CD8-positive, alpha-beta T cell (primary cell): ENCODE measurements at regions of chr9 and their contacts with region 1.

Region 1: DNA sequence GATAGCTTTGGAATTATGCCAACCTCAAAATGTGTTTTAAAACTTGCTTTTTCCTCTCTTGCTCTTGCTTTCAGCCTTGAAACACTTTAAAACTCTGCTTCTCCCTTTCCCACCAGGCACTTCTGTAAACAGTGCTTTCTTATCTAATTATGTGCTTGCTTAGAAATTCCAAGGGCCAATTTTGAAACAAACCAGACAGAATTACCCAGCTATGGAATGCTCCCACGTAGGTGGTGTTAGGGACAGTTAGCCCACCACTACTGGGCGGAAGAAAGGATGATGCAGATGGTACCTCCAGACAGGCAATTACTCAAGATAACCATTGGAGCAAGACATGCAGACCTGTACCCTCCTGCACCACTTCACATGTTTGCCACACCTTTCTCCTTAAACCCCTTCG is 523.0 kb upstream of the PTPRD start:
- DNase-seq: no peak
- ATAC-seq: no peak
- H3K4me3 ChIP-seq: no peak overlapping the region
- H3K4me3 Mint-ChIP-seq: no peak overlapping the region
- H3K27ac ChIP-seq: no peak overlapping the region
- H3K27ac Mint-ChIP-seq: no peak overlapping the region
- H3K4me1 ChIP-seq: no peaks in the 10 kb centered on the region
- H3K4me1 Mint-ChIP-seq: no peaks in the 10 kb centered on the region
- H3K27me3 ChIP-seq: no peaks in the 10 kb centered on the region
- H3K27me3 Mint-ChIP-seq: no peaks in the 10 kb centered on the region
- CTCF ChIP-seq: no peak

Region 2: GRCh38 chr9:11194246-11194645 is 58.4 kb after region 1 on chr9:
- CTCF ChIA-PET with region 1: no interaction called
- POLR2A ChIA-PET with region 1: no interaction called
- intact Hi-C with region 1: loop called in 1 of 2 experiments (anchors 10 kb)
- DNase-seq: no peak
- ATAC-seq: no peak
- H3K4me3 ChIP-seq: no peak overlapping the region
- H3K4me3 Mint-ChIP-seq: no peak overlapping the region
- H3K27ac ChIP-seq: no peak overlapping the region
- H3K27ac Mint-ChIP-seq: no peak overlapping the region
- H3K4me1 ChIP-seq: no peaks in the 10 kb centered on the region
- H3K4me1 Mint-ChIP-seq: no peaks in the 10 kb centered on the region
- H3K27me3 ChIP-seq: no peaks in the 10 kb centered on the region
- H3K27me3 Mint-ChIP-seq: no peaks in the 10 kb centered on the region
- CTCF ChIP-seq: no peak